ENCODE measurements at regions of chr15 and their contacts with region 1.

Region 1: GRCh38 chr15:63870403-63871209 is 36.9 kb upstream of the HERC1 start:
- DNase-seq: peak; percentile 78
- H3K4me3 ChIP-seq: no peak overlapping the region
- H3K27ac ChIP-seq: no peak overlapping the region
- H3K4me1 ChIP-seq: no peaks in the 10 kb centered on the region
- H3K27me3 ChIP-seq: peaks cover 0 to 3% of the 10 kb centered on the region in 2 experiments
- CTCF ChIP-seq: no peak
- POLR2A ChIP-seq: no peak

Region 2: GRCh38 chr15:63818191-63818590 is 52.4 kb before region 1 on chr15:
- CTCF ChIA-PET with region 1: interaction called, 10 read pairs
- POLR2A ChIA-PET with region 1: no interaction called
- dilution Hi-C with region 1: no loop called
- intact Hi-C with region 1: no loop called
- DNase-seq: peak; percentile 87
- H3K4me3 ChIP-seq: no peak overlapping the region
- H3K27ac ChIP-seq: no peak overlapping the region
- H3K4me1 ChIP-seq: peaks cover 13% of the 10 kb centered on the region
- H3K27me3 ChIP-seq: no peaks in the 10 kb centered on the region
- CTCF ChIP-seq: peak; percentile 7 to 11
- POLR2A ChIP-seq: no peak

Region 3: DNA sequence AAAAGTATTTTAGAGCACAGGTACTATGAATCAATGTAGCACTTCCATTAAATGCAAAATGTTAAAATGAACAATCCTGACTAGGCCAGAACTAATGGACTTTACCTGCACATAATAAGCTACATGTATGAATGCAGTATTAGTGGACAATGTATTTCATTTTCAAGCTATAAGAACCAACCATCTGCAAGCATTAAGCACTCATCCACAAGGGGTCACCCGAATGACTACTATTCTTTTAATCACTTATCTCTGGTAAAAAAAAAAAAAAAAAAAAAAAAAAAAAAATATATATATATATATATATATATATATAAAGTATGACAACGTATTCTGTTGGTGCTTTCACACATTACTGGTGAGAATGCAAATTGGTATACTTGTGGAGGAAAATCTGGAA is 44.1 kb before region 1 on chr15:
- CTCF ChIA-PET with region 1: interaction called, 16 read pairs
- POLR2A ChIA-PET with region 1: no interaction called
- dilution Hi-C with region 1: no loop called
- intact Hi-C with region 1: loop called (anchors 5 kb)
- DNase-seq: peak; percentile 47
- H3K4me3 ChIP-seq: no peak overlapping the region
- H3K27ac ChIP-seq: no peak overlapping the region
- H3K4me1 ChIP-seq: peaks cover 4% of the 10 kb centered on the region
- H3K27me3 ChIP-seq: no peaks in the 10 kb centered on the region
- CTCF ChIP-seq: peak in 1 of 2 donors; percentile 10
- POLR2A ChIP-seq: no peak

Region 4: DNA sequence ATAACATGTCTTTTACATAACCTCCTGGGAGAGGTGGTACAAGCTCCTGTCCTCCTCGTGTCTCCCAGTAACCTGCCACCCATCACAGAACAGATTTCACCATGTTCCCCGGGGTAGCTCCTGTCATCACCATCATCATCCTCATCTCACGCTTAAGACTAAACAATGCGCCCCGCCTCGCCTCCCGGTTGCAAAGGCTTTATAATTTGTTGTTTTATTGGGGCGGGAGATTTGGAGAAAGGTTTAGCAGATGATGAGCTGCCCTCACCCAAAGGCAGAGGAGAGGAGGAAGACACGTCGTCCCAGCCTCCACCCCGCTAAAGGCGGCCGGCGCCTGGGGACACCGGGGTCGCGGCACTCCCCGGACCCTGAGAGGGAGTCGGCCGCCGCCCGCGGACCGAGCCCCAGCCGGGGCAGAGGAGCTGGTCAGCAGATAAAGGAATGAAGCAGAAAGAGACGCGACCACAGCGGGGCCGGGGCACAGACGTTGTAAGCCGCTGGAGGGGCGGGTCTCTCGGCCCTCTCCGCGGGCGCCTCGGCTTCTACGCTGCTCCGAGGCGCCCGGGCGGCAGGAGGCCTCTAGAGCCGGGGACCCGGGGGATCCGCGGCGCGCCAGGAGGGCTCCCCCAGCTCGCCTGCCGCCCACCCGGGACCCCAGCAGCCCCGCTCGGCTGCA is 37.4 kb before region 1 on chr15:
- CTCF ChIA-PET with region 1: interaction called, 8 read pairs
- POLR2A ChIA-PET with region 1: no interaction called
- dilution Hi-C with region 1: no loop called
- intact Hi-C with region 1: loop called (anchors 5 kb)
- DNase-seq: no peak
- H3K4me3 ChIP-seq: peak overlapping the region; percentile 61 to 93 (median 90)
- H3K27ac ChIP-seq: peak overlapping the region; percentile 94
- H3K4me1 ChIP-seq: peaks cover 35% of the 10 kb centered on the region
- H3K27me3 ChIP-seq: no peaks in the 10 kb centered on the region
- CTCF ChIP-seq: no peak
- POLR2A ChIP-seq: no peak

Region 5: GRCh38 chr15:63881431-63881830 is 10.8 kb after region 1 on chr15:
- CTCF ChIA-PET with region 1: interaction called, 15 read pairs
- POLR2A ChIA-PET with region 1: no interaction called
- dilution Hi-C with region 1: no loop called
- intact Hi-C with region 1: no loop called
- DNase-seq: no peak
- H3K4me3 ChIP-seq: no peak overlapping the region
- H3K27ac ChIP-seq: no peak overlapping the region
- H3K4me1 ChIP-seq: peaks cover 5% of the 10 kb centered on the region
- H3K27me3 ChIP-seq: no peaks in the 10 kb centered on the region
- CTCF ChIP-seq: no peak
- POLR2A ChIP-seq: no peak

Region 6: GRCh38 chr15:63905558-63906265 is 35.1 kb after region 1 on chr15:
- CTCF ChIA-PET with region 1: no interaction called
- POLR2A ChIA-PET with region 1: no interaction called
- dilution Hi-C with region 1: no loop called
- intact Hi-C with region 1: no loop called
- DNase-seq: peak; percentile 83
- H3K4me3 ChIP-seq: no peak overlapping the region
- H3K27ac ChIP-seq: peak overlapping the region; percentile 80
- H3K4me1 ChIP-seq: peaks cover 32% of the 10 kb centered on the region
- H3K27me3 ChIP-seq: no peaks in the 10 kb centered on the region
- CTCF ChIP-seq: no peak
- POLR2A ChIP-seq: no peak

Measured in endothelial cell of umbilical vein (primary cell).